Prostate gland (tissue), 2 donors: ENCODE measurements at regions of chr16 and their contacts with region 1.

Region 1: GRCh38 chr16:14193316-14193871 is 122.3 kb downstream of the MRTFB start:
- DNase-seq: no peak
- H3K4me3 ChIP-seq: no peak overlapping the region
- H3K27ac ChIP-seq: no peak overlapping the region
- H3K4me1 ChIP-seq: no peaks in the 10 kb centered on the region
- H3K27me3 ChIP-seq: no peaks in the 10 kb centered on the region
- CTCF ChIP-seq: no peak
- POLR2A ChIP-seq: no peak

Region 2: DNA sequence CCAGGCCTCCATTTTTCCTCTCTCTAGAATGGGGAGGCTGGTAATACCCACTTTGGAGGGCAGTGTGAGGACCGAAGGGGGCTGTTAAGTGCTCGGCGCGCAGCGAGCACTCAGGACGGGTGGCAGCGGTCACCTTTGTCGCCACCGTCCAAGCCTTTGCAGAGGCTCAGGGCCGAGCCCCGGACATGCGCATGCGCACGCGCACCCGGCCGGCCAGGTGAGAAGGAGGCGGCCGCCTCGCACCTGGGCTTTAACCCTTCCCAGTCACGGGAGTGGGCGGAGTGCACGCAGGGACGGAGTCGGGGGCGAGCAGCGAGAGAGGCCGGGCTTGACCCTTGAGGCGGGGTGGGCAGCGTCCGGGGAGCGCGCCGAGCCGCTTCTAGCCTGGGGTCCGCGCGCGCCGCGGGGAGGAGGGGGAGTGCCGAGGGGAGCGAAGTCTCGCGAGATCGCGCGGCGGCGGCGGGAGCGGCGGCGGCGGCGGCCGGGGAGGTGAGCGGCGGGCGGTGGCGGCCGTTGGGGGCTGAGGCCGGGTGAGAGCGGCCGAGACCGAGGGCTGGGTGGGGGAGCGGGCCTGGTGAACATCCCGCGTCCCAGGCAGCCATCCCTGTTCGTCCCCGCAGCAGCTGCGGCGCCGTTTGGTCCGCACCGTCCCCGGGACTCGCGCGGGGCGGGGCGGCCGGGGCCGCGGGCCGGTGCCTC is 122.4 kb before region 1 on chr16 and contains the start of gene MRTFB:
- intact Hi-C with region 1: loop called (anchors 5 kb)
- DNase-seq: peak; percentile 77
- H3K4me3 ChIP-seq: peak within 1 kb of the TSS; percentile 87 to 91
- H3K27ac ChIP-seq: peak within 1 kb of the TSS; percentile 89 to 90
- H3K4me1 ChIP-seq: no peaks in the 10 kb centered on the region
- H3K27me3 ChIP-seq: no peaks in the 10 kb centered on the region
- CTCF ChIP-seq: no peak
- POLR2A ChIP-seq: peak; percentile 32
- total RNA-seq, gene MRTFB: 46.5 to 102 TPM

Region 3: GRCh38 chr16:14140923-14141322 is 52.5 kb before region 1 on chr16:
- intact Hi-C with region 1: no loop called
- DNase-seq: no peak
- H3K4me3 ChIP-seq: no peak overlapping the region
- H3K27ac ChIP-seq: no peak overlapping the region
- H3K4me1 ChIP-seq: no peaks in the 10 kb centered on the region
- H3K27me3 ChIP-seq: no peaks in the 10 kb centered on the region
- CTCF ChIP-seq: no peak
- POLR2A ChIP-seq: no peak